Tibial artery (tissue), 4 donors: ENCODE measurements at regions of chr21 and their contacts with region 1.

Region 1: DNA sequence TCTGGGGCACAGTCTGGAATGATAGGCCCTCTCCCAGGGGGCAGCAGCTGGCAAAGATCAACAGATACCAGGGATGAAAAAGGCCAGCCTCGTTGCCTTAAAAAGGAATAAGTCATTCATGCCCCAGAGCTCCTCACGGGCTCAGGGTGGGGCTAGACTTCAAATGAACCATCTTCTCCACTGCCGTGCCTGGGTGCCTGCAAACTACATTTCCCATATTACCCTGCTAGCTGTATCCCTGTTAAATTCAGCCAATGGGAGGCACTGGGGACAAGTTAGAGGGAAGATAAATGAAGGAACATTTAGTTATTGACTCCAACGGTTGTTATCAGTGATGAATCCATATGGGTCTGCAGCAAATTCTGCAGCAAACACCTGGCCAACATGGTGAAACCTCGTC is 101.2 kb upstream of the CYYR1 start:
- DNase-seq: no peak
- H3K4me3 ChIP-seq: no peak overlapping the region
- H3K27ac ChIP-seq: no peak overlapping the region
- H3K4me1 ChIP-seq: no peaks in the 10 kb centered on the region
- H3K27me3 ChIP-seq: no peaks in the 10 kb centered on the region
- CTCF ChIP-seq: no peak

Region 2: DNA sequence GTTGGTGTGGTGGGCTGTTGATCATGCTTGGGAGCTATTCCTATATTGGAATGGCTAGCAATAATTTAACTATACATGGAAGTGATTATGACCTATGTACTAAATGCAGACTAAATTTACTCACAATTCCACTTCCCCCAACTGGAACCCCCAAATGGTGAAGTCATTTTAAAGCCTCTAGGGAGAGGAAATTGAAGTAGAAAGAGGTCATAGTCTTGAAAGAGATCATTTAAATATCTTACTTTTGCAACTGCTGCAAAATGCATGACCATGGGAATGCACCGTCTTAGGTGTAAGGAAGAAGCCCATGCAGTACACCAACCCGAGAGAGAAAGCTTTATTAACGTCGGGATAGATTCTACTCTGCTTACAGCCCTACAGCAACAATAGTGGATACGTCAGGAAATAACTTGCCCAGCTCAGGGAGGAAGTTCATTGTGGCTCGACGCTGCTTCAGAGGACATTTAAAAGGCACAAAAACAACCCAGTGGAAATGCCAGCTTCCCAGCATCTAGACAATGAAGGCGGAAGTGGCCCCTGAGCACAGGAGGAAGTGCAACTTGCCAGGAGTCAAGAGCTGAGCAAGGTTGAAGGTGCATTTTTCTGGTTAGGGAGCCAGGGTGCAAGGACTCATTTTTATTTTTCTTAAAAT is 127.8 kb before region 1 on chr21:
- intact Hi-C with region 1: no loop called
- DNase-seq: peak; percentile 24 to 65
- H3K4me3 ChIP-seq: no peak overlapping the region
- H3K27ac ChIP-seq: no peak overlapping the region
- H3K4me1 ChIP-seq: no peaks in the 10 kb centered on the region
- H3K27me3 ChIP-seq: no peaks in the 10 kb centered on the region
- CTCF ChIP-seq: no peak

Region 3: GRCh38 chr21:26614251-26614650 is 60.1 kb before region 1 on chr21:
- intact Hi-C with region 1: loop called (anchors 2 kb)
- DNase-seq: no peak
- H3K4me3 ChIP-seq: no peak overlapping the region
- H3K27ac ChIP-seq: no peak overlapping the region
- H3K4me1 ChIP-seq: no peaks in the 10 kb centered on the region
- H3K27me3 ChIP-seq: no peaks in the 10 kb centered on the region
- CTCF ChIP-seq: no peak

Region 4: GRCh38 chr21:26739189-26739588 is 64.9 kb after region 1 on chr21:
- intact Hi-C with region 1: no loop called
- DNase-seq: no peak
- H3K4me3 ChIP-seq: no peak overlapping the region
- H3K27ac ChIP-seq: no peak overlapping the region
- H3K4me1 ChIP-seq: no peaks in the 10 kb centered on the region
- H3K27me3 ChIP-seq: no peaks in the 10 kb centered on the region
- CTCF ChIP-seq: no peak

Region 5: DNA sequence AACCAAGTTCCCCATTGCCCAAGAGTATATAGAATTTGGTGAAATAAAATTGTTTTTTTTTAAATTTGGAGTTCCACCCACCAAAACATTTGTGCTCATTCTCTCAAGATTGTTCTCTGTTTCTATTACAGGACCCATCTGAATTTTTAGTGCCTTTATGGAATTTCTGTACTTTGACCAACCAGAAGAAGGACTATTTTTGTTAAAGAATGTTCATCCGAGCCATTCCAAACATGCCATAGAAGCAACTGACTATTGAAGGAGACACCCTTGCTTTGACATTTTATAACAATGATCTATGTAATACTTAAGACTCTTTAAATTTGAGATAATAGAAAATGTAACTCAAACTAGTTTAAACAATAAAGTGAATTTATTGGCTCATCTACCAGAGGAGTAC is 948.3 kb after region 1 on chr21:
- intact Hi-C with region 1: no loop called
- DNase-seq: no peak
- H3K4me3 ChIP-seq: no peak overlapping the region
- H3K27ac ChIP-seq: no peak overlapping the region
- H3K4me1 ChIP-seq: peaks cover 0 to 7% (median 0%) of the 10 kb centered on the region in 4 donors
- H3K27me3 ChIP-seq: no peaks in the 10 kb centered on the region
- CTCF ChIP-seq: no peak